ENCODE measurements at regions of chr12 and their contacts with region 1.

Region 1: GRCh38 chr12:92973601-92974000 is 44.5 kb upstream of the EEA1 start:
- DNase-seq: peak; percentile 73
- ATAC-seq: no peak
- H3K4me3 ChIP-seq: no peak overlapping the region
- H3K27ac ChIP-seq: no peak overlapping the region
- H3K4me1 ChIP-seq: peaks cover 29% of the 10 kb centered on the region
- H3K27me3 ChIP-seq: no peaks in the 10 kb centered on the region
- CTCF ChIP-seq: no peak

Region 2: DNA sequence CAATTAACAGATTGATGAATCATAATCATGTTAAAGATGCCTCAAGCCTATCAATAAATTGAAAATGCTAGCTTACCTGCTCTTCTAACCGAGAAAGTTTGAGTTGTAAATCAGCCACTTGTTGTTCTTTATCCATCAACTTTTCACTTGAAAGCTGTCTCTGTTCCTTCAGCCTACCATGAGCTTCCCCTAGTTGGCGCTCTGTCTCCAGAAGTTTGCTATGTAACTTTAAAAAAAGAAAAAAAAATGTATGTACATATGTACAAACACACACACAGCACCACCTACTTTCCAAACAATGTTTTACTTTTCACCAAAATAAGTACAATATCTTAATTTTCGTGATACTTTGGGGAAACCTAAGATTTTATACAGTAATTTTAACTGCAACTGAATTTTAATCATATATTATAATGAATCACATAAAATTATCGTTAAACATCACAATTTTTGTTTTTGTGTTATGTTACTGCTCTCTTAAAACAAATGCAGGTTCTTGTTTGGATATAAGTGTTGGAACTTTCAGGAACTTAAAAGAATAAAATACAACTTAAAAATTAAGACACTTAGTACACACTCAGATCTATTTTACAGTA is 145.7 kb before region 1 on chr12:
- CTCF ChIA-PET with region 1: no interaction called
- POLR2A ChIA-PET with region 1: no interaction called
- intact Hi-C with region 1: loop called (anchors 10 kb)
- DNase-seq: peak; percentile 72
- ATAC-seq: peak; percentile 53
- H3K4me3 ChIP-seq: no peak overlapping the region
- H3K27ac ChIP-seq: no peak overlapping the region
- H3K4me1 ChIP-seq: no peaks in the 10 kb centered on the region
- H3K27me3 ChIP-seq: no peaks in the 10 kb centered on the region
- CTCF ChIP-seq: peak; percentile 96

Region 3: GRCh38 chr12:93302331-93303229 is 329.0 kb after region 1 on chr12:
- CTCF ChIA-PET with region 1: no interaction called
- POLR2A ChIA-PET with region 1: no interaction called
- intact Hi-C with region 1: no loop called
- DNase-seq: no peak
- ATAC-seq: no peak
- H3K4me3 ChIP-seq: no peak overlapping the region
- H3K27ac ChIP-seq: no peak overlapping the region
- H3K4me1 ChIP-seq: no peaks in the 10 kb centered on the region
- H3K27me3 ChIP-seq: no peaks in the 10 kb centered on the region
- CTCF ChIP-seq: no peak

Measured in PC-3 (cell line).